ENCODE measurements at regions of chr2 and their contacts with region 1.

Region 1: DNA sequence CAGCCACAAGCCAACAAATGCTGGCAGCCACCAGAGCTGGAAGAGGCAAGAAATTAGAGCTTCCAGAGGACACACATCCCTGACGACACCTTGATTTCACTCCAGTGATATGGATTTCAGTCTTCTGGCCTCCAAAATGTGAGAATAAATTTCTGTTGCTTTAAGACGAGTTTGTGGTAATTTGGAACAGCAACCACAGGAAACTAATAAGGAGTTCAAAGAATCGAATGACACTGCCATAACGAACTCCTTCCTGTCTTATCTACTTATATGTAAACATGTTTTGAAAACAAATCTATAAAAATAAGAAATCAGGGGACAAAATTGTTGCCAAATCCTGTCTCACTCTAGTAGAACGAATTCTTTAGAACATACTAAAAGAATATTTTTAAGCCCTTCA is 75.8 kb downstream of the GRB14 start:
- DNase-seq: no peak
- ATAC-seq: no peak
- H3K4me3 ChIP-seq: no peak overlapping the region
- H3K27ac ChIP-seq: no peak overlapping the region
- H3K4me1 ChIP-seq: no peaks in the 10 kb centered on the region
- H3K27me3 ChIP-seq: no peaks in the 10 kb centered on the region
- CTCF ChIP-seq: no peak
- POLR2A ChIP-seq: no peak
- RAD21 ChIP-seq: no peak

Region 2: DNA sequence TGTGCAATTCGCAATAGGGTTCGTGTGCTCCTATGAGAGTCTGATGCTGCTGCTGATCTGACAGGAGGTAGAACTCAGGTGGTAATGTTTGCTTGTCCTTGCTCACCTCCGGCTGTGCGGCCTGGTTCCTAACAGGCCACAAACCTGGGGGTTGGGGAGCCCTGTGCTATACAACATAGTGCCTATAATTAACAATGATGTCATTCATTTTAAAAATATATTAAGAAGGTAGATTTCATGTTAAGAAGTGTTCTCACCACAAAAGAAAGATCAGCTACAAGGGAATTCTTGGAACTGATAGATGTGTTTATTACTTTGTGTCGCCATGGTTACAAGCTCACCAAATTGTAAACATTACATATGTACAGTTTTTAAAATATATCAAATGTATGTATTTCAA is 124.7 kb before region 1 on chr2:
- CTCF ChIA-PET with region 1: no interaction called
- POLR2A ChIA-PET with region 1: no interaction called
- dilution Hi-C with region 1: no loop called
- in situ Hi-C with region 1: no loop called
- intact Hi-C with region 1: no loop called
- DNase-seq: no peak
- ATAC-seq: no peak
- H3K4me3 ChIP-seq: no peak overlapping the region
- H3K27ac ChIP-seq: no peak overlapping the region
- H3K4me1 ChIP-seq: no peaks in the 10 kb centered on the region
- H3K27me3 ChIP-seq: no peaks in the 10 kb centered on the region
- CTCF ChIP-seq: no peak
- POLR2A ChIP-seq: no peak
- RAD21 ChIP-seq: no peak

Region 3: GRCh38 chr2:164570475-164570874 is 25.0 kb after region 1 on chr2:
- CTCF ChIA-PET with region 1: interaction called, 3 read pairs
- POLR2A ChIA-PET with region 1: no interaction called
- dilution Hi-C with region 1: no loop called
- in situ Hi-C with region 1: no loop called
- intact Hi-C with region 1: loop called (anchors 1 kb)
- DNase-seq: no peak
- ATAC-seq: no peak
- H3K4me3 ChIP-seq: no peak overlapping the region
- H3K27ac ChIP-seq: no peak overlapping the region
- H3K4me1 ChIP-seq: no peaks in the 10 kb centered on the region
- H3K27me3 ChIP-seq: peaks cover 2% of the 10 kb centered on the region; the same call in 1 of the 2 replicates
- CTCF ChIP-seq: no peak
- POLR2A ChIP-seq: no peak
- RAD21 ChIP-seq: no peak